Right cardiac atrium (tissue), 5 donors: ENCODE measurements at regions of chr7 and their contacts with region 1.

Region 1: GRCh38 chr7:75966190-75966961 is 28.0 kb downstream of the TMEM120A start:
- DNase-seq: peak; percentile 83 to 88 (median 85)
- ATAC-seq: peak; percentile 75 to 80
- H3K4me3 ChIP-seq: no peak overlapping the region
- H3K27ac ChIP-seq: peak overlapping the region; percentile 53
- H3K4me1 ChIP-seq: peaks cover 16% of the 10 kb centered on the region
- H3K27me3 ChIP-seq: no peaks in the 10 kb centered on the region

Region 2: GRCh38 chr7:75914730-75915585 is 51.4 kb before region 1 on chr7 and contains the start of gene POR:
- intact Hi-C with region 1: loop called in 1 of 4 experiments (anchors 10 kb)
- DNase-seq: peak; percentile 93 to 99 (median 97)
- ATAC-seq: peak; percentile 99 to 100
- H3K4me3 ChIP-seq: peak within 1 kb of the TSS; percentile 79
- H3K27ac ChIP-seq: peak within 1 kb of the TSS; percentile 90
- H3K4me1 ChIP-seq: peaks cover 2% of the 10 kb centered on the region
- H3K27me3 ChIP-seq: no peaks in the 10 kb centered on the region
- total RNA-seq, gene POR: 59.8 to 122 (median 62.7) TPM